ENCODE measurements at regions of chr15 and their contacts with region 1.

Region 1: GRCh38 chr15:60814062-60814461 is 335.1 kb upstream of the ICE2 start:
- DNase-seq: no peak
- H3K4me3 ChIP-seq: no peak overlapping the region
- H3K27ac ChIP-seq: no peak overlapping the region
- H3K4me1 ChIP-seq: no peaks in the 10 kb centered on the region
- H3K27me3 ChIP-seq: peaks cover 5% of the 10 kb centered on the region
- CTCF ChIP-seq: no peak

Region 2: DNA sequence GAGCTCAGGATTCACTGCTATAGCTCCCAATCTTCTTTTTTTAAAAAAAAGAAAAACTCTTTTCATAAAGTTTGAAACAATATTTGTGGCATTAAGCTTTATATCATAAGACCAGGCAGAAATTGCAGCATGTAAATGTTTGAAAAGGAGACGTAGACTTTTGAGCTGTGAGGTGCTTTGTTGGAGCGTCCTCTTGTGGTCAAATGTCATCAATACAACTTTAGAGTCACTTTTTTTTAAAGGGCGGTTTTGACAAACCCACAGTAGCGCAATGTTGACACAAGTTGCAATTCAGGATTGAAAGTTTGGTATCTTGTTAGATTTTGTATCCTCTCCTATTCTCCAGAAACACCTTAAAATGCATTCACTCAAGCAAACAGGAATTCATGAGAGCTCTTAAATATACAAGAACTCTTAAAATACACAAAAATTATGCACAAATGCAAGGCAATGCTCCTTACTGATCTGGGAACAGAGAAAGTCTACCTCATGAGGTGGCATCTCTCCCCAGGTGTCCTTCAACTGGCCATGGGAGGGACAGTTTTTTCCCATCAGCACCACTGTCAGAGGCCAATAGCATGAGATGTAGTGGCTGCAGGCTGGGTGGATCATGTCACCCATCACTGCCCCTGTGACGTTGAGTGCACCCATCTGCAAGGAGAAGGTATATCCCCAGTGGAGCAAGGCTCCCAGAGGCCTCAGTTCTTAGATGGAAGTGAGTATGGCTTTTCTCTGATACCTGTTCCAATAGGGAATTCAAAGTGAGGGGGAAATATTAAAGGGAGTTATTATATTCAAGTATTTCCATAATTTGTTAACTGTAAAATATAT is 487.0 kb before region 1 on chr15:
- CTCF ChIA-PET with region 1: no interaction called
- dilution Hi-C with region 1: no loop called
- in situ Hi-C with region 1: no loop called
- intact Hi-C with region 1: no loop called
- DNase-seq: peak; percentile 48
- H3K4me3 ChIP-seq: no peak overlapping the region
- H3K27ac ChIP-seq: no peak overlapping the region
- H3K4me1 ChIP-seq: peaks cover 3% of the 10 kb centered on the region
- H3K27me3 ChIP-seq: no peaks in the 10 kb centered on the region
- CTCF ChIP-seq: peak; percentile 82 to 91

Region 3: GRCh38 chr15:60766391-60767128 is 47.5 kb before region 1 on chr15:
- CTCF ChIA-PET with region 1: no interaction called
- dilution Hi-C with region 1: no loop called
- in situ Hi-C with region 1: no loop called
- intact Hi-C with region 1: no loop called
- DNase-seq: no peak
- H3K4me3 ChIP-seq: no peak overlapping the region
- H3K27ac ChIP-seq: no peak overlapping the region
- H3K4me1 ChIP-seq: no peaks in the 10 kb centered on the region
- H3K27me3 ChIP-seq: peaks cover 5% of the 10 kb centered on the region
- CTCF ChIP-seq: no peak

Region 4: DNA sequence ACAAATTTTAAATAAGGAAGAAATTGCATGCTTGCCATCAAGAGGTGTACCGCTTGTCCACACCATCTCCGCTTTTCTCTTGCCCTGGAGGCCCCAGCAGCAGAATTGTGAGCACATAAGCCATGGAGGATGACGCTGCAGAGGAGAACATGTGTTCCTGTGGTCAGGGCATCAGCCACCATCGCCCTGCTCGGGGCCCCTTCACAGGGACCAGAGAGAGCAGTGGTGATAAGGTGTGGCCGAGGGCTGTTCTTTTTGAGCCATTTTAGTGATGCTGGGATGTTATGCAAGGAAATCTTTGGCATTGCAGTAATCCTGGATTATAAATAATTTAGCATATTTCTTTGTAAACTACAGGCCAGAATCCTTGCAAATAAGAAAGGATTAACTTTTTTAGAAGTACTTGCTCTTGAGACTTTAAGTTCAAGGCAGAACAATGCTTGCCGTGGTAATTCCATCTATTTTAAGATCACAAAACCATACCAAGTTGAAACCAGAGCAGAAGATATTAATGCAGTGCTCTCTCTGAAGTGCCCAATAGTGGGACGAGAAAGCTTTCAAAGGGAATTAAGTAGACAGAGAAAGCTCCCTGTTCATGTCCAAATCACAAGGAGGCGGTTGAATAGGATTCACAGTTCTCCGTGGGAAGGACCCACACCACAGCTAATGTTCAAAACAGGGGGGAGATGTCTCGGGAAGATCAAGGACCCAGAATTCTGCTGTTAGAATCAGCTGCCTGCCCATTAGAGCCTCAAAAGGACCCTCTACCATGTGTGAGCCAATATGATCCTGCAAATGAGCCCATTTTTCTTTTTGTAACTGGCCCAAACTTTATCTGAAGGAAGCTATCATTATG is 76.5 kb after region 1 on chr15:
- CTCF ChIA-PET with region 1: no interaction called
- dilution Hi-C with region 1: loop called (anchors 5 kb)
- in situ Hi-C with region 1: no loop called
- intact Hi-C with region 1: no loop called
- DNase-seq: no peak
- H3K4me3 ChIP-seq: no peak overlapping the region
- H3K27ac ChIP-seq: no peak overlapping the region
- H3K4me1 ChIP-seq: no peaks in the 10 kb centered on the region
- H3K27me3 ChIP-seq: no peaks in the 10 kb centered on the region
- CTCF ChIP-seq: no peak

Measured in mammary epithelial cell (primary cell).